GM18951 (cell line): ENCODE measurements at regions of chr12 and their contacts with region 1.

Region 1: DNA sequence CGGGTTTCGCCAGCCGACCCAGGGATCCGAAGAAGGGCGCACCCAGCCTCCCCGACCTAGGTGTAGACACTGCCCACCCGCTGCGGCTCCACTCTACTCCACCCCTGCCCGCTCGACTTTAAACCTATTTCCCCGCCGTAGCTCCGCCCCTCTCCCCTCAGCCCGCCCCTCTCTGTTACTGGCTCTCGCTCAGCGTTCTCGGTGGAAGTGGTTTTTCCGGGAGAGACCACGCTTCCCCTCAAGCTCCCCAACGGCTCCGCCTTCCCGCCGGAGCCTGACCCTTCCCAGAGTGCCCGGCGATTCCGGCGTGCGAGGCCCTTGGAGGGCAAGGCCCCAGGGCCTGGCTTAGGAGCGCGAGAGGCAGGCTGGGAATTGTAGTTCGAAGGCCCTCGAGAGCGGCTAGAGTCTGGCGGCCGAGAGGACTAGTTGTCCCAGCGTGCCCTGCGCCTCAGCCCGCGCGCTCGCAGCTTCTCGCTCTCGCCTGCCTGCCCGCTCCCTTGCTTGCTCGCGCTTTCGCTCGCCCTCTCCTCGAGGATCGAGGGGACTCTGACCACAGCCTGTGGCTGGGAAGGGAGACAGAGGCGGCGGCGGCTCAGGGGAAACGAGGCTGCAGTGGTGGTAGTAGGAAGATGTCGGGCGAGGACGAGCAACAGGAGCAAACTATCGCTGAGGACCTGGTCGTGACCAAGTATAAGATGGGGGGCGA is at the start of gene PA2G4:
- POLR2A ChIP-seq: peak; percentile 92

Region 2: DNA sequence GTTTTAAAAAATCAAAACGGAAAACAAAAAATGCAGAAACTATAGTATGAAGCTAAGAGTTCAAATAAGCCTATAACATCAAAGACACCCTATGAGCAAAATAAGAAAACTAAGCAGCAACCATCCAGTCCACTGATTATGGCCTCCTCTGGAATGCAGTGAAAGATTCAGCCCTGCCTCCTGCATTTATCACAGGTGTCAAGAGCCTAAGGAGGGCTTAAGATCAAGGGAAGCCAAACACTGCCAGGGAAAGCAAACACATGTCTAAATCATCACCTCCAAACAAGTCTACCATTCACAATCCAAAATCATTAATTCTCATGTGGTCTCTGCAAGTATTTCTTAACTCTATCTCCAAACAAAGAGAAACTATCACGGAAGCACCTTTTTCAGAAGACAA is 315.1 kb before region 1 on chr12:
- in situ Hi-C with region 1: no loop called
- POLR2A ChIP-seq: no peak

Region 3: DNA sequence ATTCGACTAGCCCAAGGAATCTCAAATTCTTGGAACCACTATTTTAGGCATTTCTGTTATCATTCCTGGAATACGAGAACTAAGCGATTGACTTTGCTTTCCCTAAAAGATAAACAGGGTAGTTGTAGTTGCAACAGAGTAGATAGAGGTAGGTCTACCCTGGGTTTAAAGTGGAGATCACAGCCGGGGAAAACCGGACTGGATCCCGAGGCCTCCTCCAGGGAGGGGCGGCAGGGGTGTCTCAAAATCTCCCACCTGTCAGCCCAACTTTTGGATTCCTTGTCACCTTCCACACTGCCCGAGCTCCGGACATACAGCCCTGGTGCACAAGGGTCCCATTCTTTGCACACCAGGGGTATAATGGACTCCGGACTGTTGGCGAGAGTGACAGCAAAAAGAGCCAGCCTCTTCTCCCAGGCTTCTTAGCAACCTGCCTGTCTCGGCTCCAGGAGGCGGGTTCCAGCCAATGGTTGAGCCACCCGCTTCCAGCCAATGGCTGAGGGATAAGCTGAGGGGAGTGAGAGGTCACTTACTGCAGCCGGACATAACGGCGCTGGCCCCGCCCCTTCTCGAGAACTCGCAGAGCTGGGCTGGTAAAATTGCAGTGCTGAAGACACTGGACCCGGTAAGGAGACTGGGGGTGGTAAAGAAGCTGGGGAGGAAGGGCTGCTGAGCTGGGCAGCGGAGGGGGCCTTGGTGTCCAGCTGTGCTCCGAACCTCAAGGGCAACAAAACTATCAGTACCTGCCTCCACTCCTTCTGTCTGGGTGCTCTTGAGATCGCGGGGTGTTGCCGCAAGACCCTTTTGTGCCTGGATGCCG is 107.3 kb before region 1 on chr12 and contains the start of gene SUOX:
- in situ Hi-C with region 1: loop called (anchors 10 kb)
- POLR2A ChIP-seq: peak; percentile 76